ENCODE measurements at regions of chr10 and their contacts with region 1.

Region 1: DNA sequence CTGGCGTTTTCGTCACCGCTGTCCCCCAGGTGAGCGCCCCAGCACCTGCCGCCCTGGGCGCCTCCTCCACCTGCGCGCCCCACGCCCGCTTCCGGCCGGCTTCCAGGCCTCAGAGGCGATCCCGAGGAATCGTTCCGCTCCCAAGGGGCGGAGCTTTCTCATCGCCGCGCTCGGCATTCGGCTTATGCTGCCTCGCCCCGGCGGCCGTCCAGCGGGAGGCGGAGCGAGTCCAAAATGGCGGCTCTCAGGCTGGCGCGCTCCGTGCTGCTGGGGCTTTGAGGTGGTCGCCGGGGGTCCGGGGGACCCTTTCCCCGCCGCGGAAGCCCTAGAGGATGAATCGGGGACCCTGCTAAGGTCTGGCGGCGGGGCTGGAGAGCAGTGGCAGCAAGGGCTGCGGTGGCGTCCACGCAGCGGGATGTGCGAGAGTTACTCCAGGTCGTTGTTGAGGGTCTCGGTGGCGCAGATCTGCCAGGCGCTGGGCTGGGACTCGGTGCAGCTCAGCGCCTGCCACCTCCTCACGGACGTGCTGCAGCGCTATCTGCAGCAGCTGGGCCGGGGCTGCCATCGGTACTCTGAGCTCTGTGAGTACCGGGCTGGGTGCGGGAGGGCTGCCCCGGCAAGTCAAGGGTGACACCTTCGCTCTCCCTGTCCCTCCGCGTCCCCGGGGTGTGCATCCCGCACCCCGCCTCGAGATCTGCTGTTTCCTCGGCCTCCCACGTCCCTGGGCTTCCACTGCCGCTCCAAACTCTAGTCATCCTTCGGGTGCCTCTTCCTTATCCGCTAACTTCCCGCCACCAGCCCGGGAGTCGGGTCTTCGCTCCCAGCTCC is at the start of gene TAF3:
- DNase-seq: peak; percentile 86 to 95 (median 91)
- ATAC-seq: peak; percentile 93
- H3K4me3 ChIP-seq: peak within 1 kb of the TSS; percentile 99
- H3K4me3 Mint-ChIP-seq: peak within 1 kb of the TSS; percentile 97
- H3K27ac ChIP-seq: peak within 1 kb of the TSS; percentile 29 to 50
- H3K27ac Mint-ChIP-seq: peak within 1 kb of the TSS; percentile 80
- H3K4me1 ChIP-seq: peaks cover 25% of the 10 kb centered on the region
- H3K4me1 Mint-ChIP-seq: peaks cover 48% of the 10 kb centered on the region
- H3K27me3 ChIP-seq: peaks cover 0 to 8% of the 10 kb centered on the region in 2 experiments
- H3K27me3 Mint-ChIP-seq: peaks cover 5% of the 10 kb centered on the region
- CTCF ChIP-seq: no peak
- total RNA-seq, gene TAF3: 12.6 to 12.8 TPM

Region 2: DNA sequence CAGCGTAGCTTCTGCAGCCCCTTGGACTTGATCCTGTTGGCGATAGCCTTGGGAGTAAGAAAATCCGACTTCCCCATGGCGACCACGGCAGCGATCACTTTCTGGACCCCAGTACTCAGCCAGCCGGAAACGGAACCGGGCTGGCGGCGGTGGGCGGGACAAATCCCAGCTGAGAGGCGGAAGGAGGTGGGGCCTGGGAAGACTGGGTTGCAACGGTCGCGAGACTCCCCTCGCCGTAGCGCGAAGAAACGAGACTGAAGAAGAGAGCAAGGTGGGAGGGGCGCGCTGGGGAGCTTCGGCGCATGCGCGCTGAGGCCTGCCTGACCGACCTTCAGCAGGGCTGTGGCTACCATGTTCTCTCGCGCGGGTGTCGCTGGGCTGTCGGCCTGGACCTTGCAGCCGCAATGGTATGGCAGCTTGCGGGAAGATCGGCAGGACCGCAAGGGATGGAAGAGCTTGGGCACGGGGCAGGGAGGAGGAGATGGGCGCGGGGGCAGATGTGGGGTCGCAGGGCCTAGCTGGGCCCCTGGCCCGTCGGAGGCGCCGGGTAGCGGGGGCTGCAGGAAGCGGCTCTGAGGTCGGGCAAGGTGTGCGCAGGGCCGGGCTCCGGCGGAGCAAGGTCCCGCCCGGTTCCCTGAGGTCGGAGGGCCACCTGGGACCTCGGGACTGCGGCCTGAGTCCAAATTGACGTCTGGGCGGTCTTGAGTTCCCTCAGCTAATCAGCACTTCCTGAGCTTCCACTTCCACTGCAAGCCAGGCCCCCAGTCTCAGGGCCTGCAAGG is 30.5 kb before region 1 on chr10 and contains the starts of genes ATP5F1C and KIN:
- CTCF ChIA-PET with region 1: interaction called, 6 read pairs
- POLR2A ChIA-PET with region 1: interaction called, 135 read pairs
- intact Hi-C with region 1: loop called (anchors 1 kb)
- DNase-seq: peak; percentile 95 to 99 (median 96)
- ATAC-seq: peak; percentile 95
- H3K4me3 ChIP-seq: peak within 1 kb of the TSS; percentile 93
- H3K4me3 Mint-ChIP-seq: no peak within 1 kb of the TSS
- H3K27ac ChIP-seq: peak within 1 kb of the TSS; percentile 45 to 57
- H3K27ac Mint-ChIP-seq: no peak within 1 kb of the TSS
- H3K4me1 ChIP-seq: peaks cover 27% of the 10 kb centered on the region
- H3K4me1 Mint-ChIP-seq: peaks cover 66% of the 10 kb centered on the region
- H3K27me3 ChIP-seq: no peaks in the 10 kb centered on the region
- H3K27me3 Mint-ChIP-seq: no peaks in the 10 kb centered on the region
- CTCF ChIP-seq: no peak
- total RNA-seq, gene ATP5F1C: 111 TPM
- total RNA-seq, gene KIN: 6.5 to 8.6 TPM

Region 3: DNA sequence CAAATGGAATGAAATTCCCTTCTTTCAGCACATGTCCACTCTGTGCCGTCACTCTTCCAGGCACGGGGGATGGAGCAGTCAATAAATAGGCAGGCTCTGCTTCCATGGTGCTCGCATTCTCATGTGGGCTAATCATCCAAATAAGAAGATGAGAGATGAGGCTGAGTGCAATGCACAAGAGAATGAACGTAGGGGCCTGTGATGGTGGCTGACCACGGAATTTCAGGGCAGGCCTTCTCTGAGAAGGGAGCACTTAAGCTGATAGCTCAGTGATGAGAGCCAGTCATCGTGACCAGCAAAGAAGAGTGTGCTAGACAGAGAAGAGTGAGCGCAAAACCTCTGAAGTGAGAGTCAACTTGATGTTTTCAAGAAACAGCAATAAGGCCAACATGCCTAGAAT is 47.7 kb after region 1 on chr10:
- CTCF ChIA-PET with region 1: no interaction called
- POLR2A ChIA-PET with region 1: no interaction called
- intact Hi-C with region 1: no loop called
- DNase-seq: no peak
- ATAC-seq: no peak
- H3K4me3 ChIP-seq: no peak overlapping the region
- H3K4me3 Mint-ChIP-seq: no peak overlapping the region
- H3K27ac ChIP-seq: no peak overlapping the region
- H3K27ac Mint-ChIP-seq: peak overlapping the region; percentile 34
- H3K4me1 ChIP-seq: no peaks in the 10 kb centered on the region
- H3K4me1 Mint-ChIP-seq: peaks cover 32% of the 10 kb centered on the region
- H3K27me3 ChIP-seq: no peaks in the 10 kb centered on the region
- H3K27me3 Mint-ChIP-seq: no peaks in the 10 kb centered on the region
- CTCF ChIP-seq: no peak